Mammary epithelial cell (primary cell): ENCODE measurements at regions of chr2 and their contacts with region 1.

Region 1: GRCh38 chr2:43142921-43143438 is 83.4 kb downstream of the ZFP36L2 start:
- DNase-seq: no peak
- H3K4me3 ChIP-seq: no peak overlapping the region
- H3K27ac ChIP-seq: no peak overlapping the region
- H3K4me1 ChIP-seq: no peaks in the 10 kb centered on the region
- H3K27me3 ChIP-seq: no peaks in the 10 kb centered on the region
- CTCF ChIP-seq: peak in 1 of 2 donors; percentile 20

Region 2: DNA sequence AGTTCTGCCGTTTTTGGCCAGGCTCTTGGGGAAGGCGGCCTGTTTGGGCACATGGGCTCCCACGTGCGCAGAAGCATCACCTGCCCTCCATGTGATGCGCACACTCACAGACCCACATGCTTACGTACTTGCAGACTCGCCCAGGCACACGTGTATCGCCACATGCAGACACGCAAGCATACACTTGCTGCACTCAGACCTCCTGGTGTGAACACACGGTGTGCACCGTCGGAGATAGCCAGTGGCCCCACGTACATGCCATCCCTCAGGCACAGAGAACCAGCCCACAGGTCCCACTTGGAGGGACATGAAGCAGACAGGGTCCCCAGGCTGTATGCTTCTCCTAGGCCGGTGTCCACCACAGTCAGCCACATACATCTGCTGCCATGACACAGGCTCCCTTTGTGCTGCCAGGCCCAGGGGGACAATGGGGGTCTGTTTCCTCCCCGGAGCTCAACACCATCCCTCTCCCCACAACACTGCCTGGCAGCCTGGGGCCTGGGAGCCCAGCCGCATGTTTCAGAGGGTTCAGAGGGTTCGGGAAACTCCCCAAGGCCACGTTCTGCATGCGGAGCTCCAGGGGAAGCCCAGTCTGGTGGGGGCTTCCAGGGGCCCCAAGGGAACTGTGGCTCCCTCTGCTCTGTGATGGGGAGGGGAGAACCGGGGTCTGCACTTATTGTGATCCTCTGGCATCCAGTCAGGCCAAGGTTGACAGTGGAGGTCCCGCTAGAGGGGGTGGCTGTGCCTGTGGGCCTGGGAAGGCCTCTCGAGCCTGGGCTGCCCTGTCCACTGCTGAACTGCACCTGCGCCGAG is 142.5 kb before region 1 on chr2:
- CTCF ChIA-PET with region 1: no interaction called
- dilution Hi-C with region 1: no loop called
- in situ Hi-C with region 1: no loop called
- intact Hi-C with region 1: no loop called
- DNase-seq: no peak
- H3K4me3 ChIP-seq: no peak overlapping the region
- H3K27ac ChIP-seq: no peak overlapping the region
- H3K4me1 ChIP-seq: no peaks in the 10 kb centered on the region
- H3K27me3 ChIP-seq: no peaks in the 10 kb centered on the region
- CTCF ChIP-seq: no peak

Region 3: DNA sequence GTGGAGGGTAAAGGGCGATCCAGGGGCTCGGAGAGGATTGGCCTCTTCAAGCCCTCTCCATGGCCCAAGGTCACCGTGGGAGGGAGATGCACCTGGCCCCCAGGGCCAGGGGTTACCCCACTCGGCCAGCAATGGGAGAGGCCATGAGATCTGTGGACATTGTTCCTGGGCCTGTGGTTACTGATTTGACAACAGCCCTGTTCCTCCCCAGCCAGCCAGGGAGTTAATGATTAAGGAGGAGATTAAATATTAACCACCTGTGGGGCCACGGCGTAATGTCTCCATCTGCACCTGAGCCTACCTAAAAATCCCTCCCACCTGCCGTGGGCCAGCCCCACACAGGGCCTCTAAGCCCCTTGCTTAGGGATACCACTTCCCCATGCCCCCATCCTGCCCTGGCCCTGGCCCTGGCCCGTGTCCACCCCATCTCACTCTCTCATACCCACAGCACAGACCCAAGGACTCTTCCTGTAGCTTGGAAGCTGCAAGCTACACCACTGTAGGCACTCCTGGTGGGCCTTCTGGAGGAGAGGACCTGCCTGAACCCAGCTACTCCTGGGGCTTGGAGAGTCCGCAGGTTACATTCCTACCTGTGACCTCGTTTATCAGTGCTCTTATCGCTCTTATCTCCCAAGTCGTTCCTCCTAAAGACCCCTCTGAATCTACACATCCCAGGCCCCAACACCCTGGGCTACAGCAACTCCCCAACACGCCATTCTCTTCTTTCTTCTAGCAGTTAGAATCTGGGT is 51.3 kb after region 1 on chr2:
- CTCF ChIA-PET with region 1: no interaction called
- dilution Hi-C with region 1: loop called (anchors 5 kb)
- in situ Hi-C with region 1: no loop called
- intact Hi-C with region 1: no loop called
- DNase-seq: no peak
- H3K4me3 ChIP-seq: no peak overlapping the region
- H3K27ac ChIP-seq: no peak overlapping the region
- H3K4me1 ChIP-seq: peaks cover 2% of the 10 kb centered on the region
- H3K27me3 ChIP-seq: no peaks in the 10 kb centered on the region
- CTCF ChIP-seq: no peak